Activated CD4-positive, alpha-beta T cell treated with anti-CD3 and anti-CD28 coated beads for 36 hours (primary cell): ENCODE measurements at regions of chr4 and their contacts with region 1.

Region 1: GRCh38 chr4:125314676-125315575 is at the start of gene FAT4:
- DNase-seq: peak; percentile 64
- ATAC-seq: peak; percentile 88
- H3K4me3 Mint-ChIP-seq: peak within 1 kb of the TSS; percentile 72
- H3K27ac Mint-ChIP-seq: no peak within 1 kb of the TSS
- H3K4me1 Mint-ChIP-seq: peaks cover 32% of the 10 kb centered on the region
- H3K27me3 Mint-ChIP-seq: peaks cover 72% of the 10 kb centered on the region
- total RNA-seq, gene FAT4: not detected

Region 2: DNA sequence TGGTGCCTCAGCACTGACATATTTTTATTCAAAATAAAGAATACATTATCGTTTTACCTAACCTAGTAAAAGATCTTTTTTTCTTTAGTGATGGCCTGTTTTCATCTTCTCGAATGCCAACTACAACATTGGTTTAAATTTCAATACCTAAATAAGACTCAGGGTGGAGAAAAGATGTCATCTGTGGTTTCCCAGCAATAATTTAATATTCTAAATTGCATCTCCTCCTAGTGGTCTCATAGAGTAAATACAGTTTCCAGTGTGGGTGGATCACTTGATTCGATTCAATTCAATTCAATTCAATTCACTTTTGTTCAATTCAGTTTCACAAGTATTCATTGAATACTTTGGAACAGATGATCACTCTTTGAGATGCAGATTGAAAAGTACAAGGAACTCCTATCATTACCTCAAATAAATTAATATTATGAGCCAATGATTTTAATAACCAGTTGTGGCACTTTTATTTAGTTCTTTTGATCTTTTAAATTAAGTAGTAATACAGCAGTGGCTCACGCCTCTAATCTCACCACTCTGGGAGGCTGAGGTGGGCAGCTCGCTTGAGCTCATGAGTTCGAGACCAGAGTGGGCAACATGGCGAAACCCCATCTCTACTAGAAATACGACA is 427.0 kb after region 1 on chr4:
- CTCF ChIA-PET with region 1: no interaction called
- POLR2A ChIA-PET with region 1: no interaction called
- intact Hi-C with region 1: loop called (anchors 1 to 10 kb)
- DNase-seq: no peak
- ATAC-seq: no peak
- H3K4me3 Mint-ChIP-seq: no peak overlapping the region
- H3K27ac Mint-ChIP-seq: no peak overlapping the region
- H3K4me1 Mint-ChIP-seq: no peaks in the 10 kb centered on the region
- H3K27me3 Mint-ChIP-seq: no peaks in the 10 kb centered on the region

Region 3: GRCh38 chr4:125951261-125951887 is 636.4 kb after region 1 on chr4:
- CTCF ChIA-PET with region 1: no interaction called
- POLR2A ChIA-PET with region 1: no interaction called
- intact Hi-C with region 1: no loop called
- DNase-seq: no peak
- ATAC-seq: no peak
- H3K4me3 Mint-ChIP-seq: no peak overlapping the region
- H3K27ac Mint-ChIP-seq: no peak overlapping the region
- H3K4me1 Mint-ChIP-seq: no peaks in the 10 kb centered on the region
- H3K27me3 Mint-ChIP-seq: no peaks in the 10 kb centered on the region

Region 4: GRCh38 chr4:126405369-126405982 is 1090.5 kb after region 1 on chr4:
- CTCF ChIA-PET with region 1: no interaction called
- POLR2A ChIA-PET with region 1: no interaction called
- intact Hi-C with region 1: loop called in 1 of 2 experiments (anchors 5 kb)
- DNase-seq: no peak
- ATAC-seq: no peak
- H3K4me3 Mint-ChIP-seq: no peak overlapping the region
- H3K27ac Mint-ChIP-seq: no peak overlapping the region
- H3K4me1 Mint-ChIP-seq: no peaks in the 10 kb centered on the region
- H3K27me3 Mint-ChIP-seq: no peaks in the 10 kb centered on the region

Region 5: DNA sequence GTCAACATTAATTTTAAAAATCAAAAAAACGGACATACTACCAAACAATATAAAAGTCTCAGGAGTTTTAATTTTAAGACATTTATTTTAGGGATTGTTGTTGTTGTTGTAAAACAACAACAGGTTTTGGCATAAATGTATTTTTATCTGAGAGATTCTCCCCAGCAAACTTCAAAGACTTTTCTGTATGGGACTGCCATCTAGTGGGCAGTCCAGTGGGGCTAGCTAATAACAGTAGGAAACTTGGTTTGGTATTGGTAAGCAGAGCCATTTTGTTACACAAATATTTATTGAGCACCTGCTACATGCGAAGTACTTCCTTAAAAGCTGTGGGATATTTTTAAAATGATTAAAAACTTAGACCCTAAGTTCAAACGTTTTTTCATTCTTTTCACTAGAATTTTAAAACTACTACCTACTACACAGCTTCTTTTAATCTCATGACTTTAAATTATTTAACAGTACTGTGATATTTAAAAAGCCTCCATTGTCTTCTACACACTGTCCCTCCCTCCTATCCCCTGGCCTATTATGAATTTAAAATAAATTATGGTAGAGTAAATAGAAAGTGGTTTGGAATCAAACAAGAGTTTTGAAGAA is 1289.4 kb after region 1 on chr4:
- CTCF ChIA-PET with region 1: no interaction called
- POLR2A ChIA-PET with region 1: no interaction called
- intact Hi-C with region 1: loop called in 1 of 2 experiments (anchors 5 kb)
- DNase-seq: peak; percentile 5
- ATAC-seq: no peak
- H3K4me3 Mint-ChIP-seq: no peak overlapping the region
- H3K27ac Mint-ChIP-seq: no peak overlapping the region
- H3K4me1 Mint-ChIP-seq: no peaks in the 10 kb centered on the region
- H3K27me3 Mint-ChIP-seq: no peaks in the 10 kb centered on the region